ENCODE measurements at regions of chr14 and their contacts with region 1.

Region 1: DNA sequence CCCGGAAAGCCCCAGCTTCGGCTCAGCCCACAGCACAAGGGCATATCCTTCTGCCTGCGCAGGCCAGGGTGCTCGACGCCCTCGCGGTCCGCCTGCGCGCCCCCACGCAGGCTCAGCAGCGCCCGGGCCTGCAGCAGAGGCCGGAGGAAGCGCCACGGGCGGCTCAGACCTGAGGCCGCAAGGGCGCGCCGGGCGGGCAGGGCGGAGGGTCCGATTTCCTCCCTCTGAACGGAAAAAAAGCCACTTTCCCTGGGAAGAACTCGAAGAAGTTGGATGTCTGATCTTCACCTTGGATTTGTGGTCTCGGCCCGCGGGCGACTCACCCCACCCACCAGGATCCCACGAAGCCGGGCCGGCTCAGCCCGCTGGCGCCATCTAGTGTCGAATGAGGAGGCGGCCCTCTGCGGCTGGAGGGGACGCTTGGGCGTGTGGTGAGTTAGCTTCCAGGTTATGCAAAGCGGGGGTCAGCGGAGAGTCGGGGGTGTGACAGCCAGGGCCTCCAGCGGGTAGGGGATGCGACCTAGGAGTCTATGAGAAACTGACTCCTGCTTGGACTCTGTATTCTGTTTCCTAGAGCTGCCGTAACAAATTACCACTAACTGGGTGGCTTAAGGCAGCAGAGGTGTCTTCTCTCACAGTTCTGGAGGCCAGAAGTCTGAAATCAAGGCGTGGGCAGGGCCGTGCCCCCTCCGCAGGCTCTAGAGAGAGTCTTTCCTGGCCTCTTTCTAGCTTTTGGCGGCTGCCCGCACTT is 40.0 kb upstream of the SRSF5 start:
- DNase-seq: peak; percentile 61 to 87
- ATAC-seq: peak; percentile 85

Region 2: DNA sequence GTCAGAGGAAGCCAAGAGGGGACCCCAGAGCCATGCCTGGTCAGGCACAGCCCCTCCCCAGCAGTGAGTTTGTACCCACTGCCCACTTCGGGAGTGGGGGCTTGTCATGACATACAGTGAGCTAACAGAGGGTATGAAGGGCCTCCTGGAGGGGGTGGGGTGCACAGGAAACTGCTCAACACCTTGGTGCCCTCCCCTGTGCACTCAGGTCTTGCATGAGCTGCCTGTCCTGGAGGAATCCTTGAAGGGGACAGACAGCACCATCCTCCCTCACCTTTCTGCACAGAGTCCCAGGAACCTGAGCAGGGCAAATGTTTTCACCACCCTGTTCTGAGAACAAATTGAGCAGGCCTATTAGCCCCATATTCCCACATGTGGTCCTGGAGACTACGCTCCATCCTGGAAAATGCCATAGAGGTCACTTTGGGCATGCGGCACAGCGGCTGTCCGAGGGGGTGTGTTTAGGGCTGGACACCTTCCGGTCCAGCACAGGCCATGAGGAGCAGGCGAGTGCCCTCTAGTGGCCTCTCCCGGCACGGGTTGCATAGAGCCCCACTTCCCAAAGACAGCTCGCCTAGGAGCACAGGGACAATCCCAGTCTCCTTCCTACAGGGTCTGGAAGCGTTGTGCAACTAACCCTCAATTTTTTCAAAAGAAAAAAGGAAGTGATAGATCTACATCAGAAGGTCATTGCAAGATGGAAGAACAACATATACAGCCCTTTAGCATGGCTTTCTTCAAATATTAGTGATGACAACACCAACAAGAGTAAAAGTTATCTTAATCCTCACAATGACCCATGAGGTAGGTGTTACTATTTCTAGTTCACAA is 902.2 kb before region 1 on chr14:
- intact Hi-C with region 1: no loop called
- DNase-seq: peak; percentile 76 to 93
- ATAC-seq: peak; percentile 93

Region 3: GRCh38 chr14:69559581-69560011 is 167.3 kb before region 1 on chr14:
- intact Hi-C with region 1: no loop called
- DNase-seq: no peak
- ATAC-seq: no peak

Region 4: DNA sequence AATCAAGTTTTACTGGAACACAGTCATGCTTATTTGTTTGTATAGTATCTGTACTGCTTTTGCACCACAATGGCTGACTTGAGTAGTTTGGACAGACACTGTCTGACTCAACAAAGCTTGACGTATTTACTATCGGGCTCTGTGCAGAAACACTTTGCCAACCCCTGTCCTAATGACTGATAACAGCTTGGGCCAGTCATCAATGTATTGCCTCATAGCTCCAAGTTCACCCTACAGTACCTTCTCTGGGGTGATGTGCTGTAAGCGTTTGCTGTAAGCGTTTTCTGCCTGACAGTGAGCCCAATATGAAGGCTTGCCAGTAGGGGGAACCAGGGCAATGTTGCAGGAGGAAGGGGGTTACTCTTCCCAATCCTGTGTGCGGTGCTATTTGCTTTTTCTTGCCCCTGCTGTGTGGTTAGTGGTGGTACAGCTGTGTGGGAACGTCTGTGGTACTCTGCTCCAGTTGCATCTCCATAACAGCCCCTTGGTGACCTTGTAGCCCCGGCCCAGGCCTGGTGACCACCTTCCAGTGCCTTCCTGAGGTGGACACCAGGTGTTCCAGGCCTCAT is 146.8 kb before region 1 on chr14:
- intact Hi-C with region 1: loop called (anchors 5 to 10 kb)
- DNase-seq: no peak
- ATAC-seq: peak; percentile 45

Region 5: GRCh38 chr14:69600304-69600891 is 126.5 kb before region 1 on chr14:
- intact Hi-C with region 1: loop called in 1 of 2 experiments (anchors 5 kb)
- DNase-seq: no peak
- ATAC-seq: no peak

Region 6: DNA sequence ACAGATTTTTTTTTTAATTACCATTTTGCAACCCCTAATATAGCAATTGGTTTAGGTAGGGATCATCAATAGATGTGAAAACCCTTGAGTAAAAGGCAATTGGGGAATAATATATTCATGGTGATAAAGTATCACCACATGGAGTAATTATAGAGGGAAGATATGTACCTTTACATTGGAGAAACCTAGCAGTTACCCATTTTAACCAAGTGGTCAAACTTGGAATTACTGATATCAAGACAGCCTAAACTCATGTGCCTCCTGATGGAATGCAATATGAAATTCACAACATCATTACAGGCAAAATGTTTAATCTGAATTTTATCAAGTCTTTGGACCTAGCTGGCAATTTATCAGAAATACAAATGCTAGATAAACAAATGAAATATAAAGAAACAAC is 76.8 kb after region 1 on chr14:
- intact Hi-C with region 1: no loop called
- DNase-seq: no peak
- ATAC-seq: no peak